Activated B cell treated with CpG ODN at 0.5 μM for 24 hours (primary cell): ENCODE measurements at regions of chr1 and their contacts with region 1.

Region 1: GRCh38 chr1:23959041-23959460 is 577 bp upstream of the PNRC2 start:
- DNase-seq: peak; percentile 78
- ATAC-seq: peak; percentile 77
- H3K4me3 Mint-ChIP-seq: peak overlapping the region; percentile 99
- H3K27ac Mint-ChIP-seq: peak overlapping the region; percentile 100
- H3K4me1 Mint-ChIP-seq: peaks cover 82% of the 10 kb centered on the region
- H3K27me3 Mint-ChIP-seq: no peaks in the 10 kb centered on the region
- CTCF ChIP-seq: no peak

Region 2: GRCh38 chr1:23800400-23801337 is 158.4 kb before region 1 on chr1 and contains the start of gene GALE:
- CTCF ChIA-PET with region 1: no interaction called
- POLR2A ChIA-PET with region 1: interaction called, 4 read pairs
- intact Hi-C with region 1: loop called (anchors 2 kb)
- DNase-seq: peak; percentile 94
- ATAC-seq: peak; percentile 95
- H3K4me3 Mint-ChIP-seq: peak within 1 kb of the TSS; percentile 91
- H3K27ac Mint-ChIP-seq: peak within 1 kb of the TSS; percentile 76
- H3K4me1 Mint-ChIP-seq: peaks cover 21% of the 10 kb centered on the region
- H3K27me3 Mint-ChIP-seq: no peaks in the 10 kb centered on the region
- CTCF ChIP-seq: no peak
- total RNA-seq, gene GALE: 15.9 and 16.4 TPM in 2 replicates

Region 3: GRCh38 chr1:23867953-23868556 is 91.0 kb before region 1 on chr1 and contains the start of gene FUCA1:
- CTCF ChIA-PET with region 1: no interaction called
- POLR2A ChIA-PET with region 1: no interaction called
- intact Hi-C with region 1: loop called (anchors 1 kb)
- DNase-seq: peak; percentile 92
- ATAC-seq: peak; percentile 97
- H3K4me3 Mint-ChIP-seq: peak within 1 kb of the TSS; percentile 84
- H3K27ac Mint-ChIP-seq: peak within 1 kb of the TSS; percentile 87
- H3K4me1 Mint-ChIP-seq: peaks cover 36% of the 10 kb centered on the region
- H3K27me3 Mint-ChIP-seq: no peaks in the 10 kb centered on the region
- CTCF ChIP-seq: no peak
- total RNA-seq, gene FUCA1: 9.5 and 10.7 TPM in 2 replicates

Region 4: GRCh38 chr1:23930861-23931490 is 28.1 kb before region 1 on chr1:
- CTCF ChIA-PET with region 1: interaction called, 3 read pairs
- POLR2A ChIA-PET with region 1: interaction called, 54 read pairs
- intact Hi-C with region 1: loop called (anchors 1 kb)
- DNase-seq: no peak
- ATAC-seq: peak; percentile 86
- H3K4me3 Mint-ChIP-seq: peak overlapping the region; percentile 76
- H3K27ac Mint-ChIP-seq: peak overlapping the region; percentile 91
- H3K4me1 Mint-ChIP-seq: peaks cover 43% of the 10 kb centered on the region
- H3K27me3 Mint-ChIP-seq: no peaks in the 10 kb centered on the region
- CTCF ChIP-seq: no peak

Region 5: DNA sequence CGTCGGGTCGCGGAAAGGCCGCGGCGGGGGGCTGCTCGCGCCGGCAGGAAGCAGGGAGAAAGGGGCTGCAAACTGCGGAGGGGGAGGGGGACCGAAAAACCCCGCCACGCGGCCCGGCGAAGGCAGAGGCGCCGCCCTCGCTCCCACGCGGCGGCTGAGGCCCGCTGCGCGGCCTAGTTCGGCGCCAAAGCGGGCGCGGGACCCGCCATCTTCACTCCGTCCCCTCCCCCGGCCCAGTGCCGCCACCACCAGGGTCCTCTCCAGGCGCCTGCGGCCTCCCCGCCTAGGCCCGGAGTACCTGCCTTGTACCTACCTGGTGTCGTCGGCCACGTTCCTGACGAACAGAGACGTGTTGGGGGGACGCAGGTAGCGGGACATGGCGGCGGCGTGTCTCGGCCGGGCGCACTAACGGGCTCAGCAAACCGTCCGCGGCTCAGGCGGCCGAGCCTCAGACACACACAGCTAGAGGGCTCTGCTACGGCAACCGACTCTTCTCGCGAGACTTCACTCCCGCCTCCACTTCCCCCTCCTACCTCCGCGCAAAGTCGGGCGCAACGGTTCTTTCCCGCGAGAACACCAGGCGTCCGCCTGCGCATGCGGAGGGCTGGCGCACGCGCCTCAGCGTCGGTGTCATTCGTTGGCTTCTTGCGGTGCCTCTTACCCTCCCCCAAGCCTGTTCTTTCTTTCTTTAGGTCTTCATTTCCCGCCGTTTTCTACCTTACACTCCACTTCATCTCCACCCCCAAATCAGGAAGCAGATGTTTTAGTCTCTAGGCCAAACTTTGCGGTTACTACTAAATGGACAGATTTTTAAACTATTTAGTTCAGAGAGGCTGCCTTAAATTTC is 21.1 kb after region 1 on chr1 and contains the start of gene SRSF10:
- CTCF ChIA-PET with region 1: interaction called, 3 read pairs
- POLR2A ChIA-PET with region 1: interaction called, 73 read pairs
- intact Hi-C with region 1: loop called (anchors 1 kb)
- DNase-seq: peak; percentile 92
- ATAC-seq: peak; percentile 96
- H3K4me3 Mint-ChIP-seq: peak within 1 kb of the TSS; percentile 96
- H3K27ac Mint-ChIP-seq: peak within 1 kb of the TSS; percentile 95
- H3K4me1 Mint-ChIP-seq: peaks cover 54% of the 10 kb centered on the region
- H3K27me3 Mint-ChIP-seq: no peaks in the 10 kb centered on the region
- CTCF ChIP-seq: no peak
- total RNA-seq, gene SRSF10: 168 and 192 TPM in 2 replicates

Region 6: DNA sequence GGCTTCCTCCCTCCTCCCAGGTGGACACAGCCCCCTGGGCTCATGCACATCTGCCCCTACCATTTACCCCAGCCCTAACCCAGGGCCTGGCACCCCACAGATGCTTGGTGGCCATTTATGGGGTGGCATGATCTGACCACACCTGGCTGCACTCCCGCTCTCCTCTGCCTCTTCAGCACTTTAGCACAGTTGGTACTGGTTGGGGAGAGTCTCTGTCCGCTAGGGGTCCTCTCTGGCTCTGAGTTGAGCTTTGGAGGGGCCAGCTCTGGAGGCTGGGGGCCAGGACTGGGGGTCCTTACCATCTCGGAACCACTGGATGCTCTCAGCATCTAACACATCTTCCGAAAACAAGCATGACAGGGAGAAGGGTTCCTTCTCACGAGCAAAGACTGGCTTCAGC is 135.5 kb after region 1 on chr1:
- CTCF ChIA-PET with region 1: no interaction called
- POLR2A ChIA-PET with region 1: no interaction called
- intact Hi-C with region 1: no loop called
- DNase-seq: no peak
- ATAC-seq: no peak
- H3K4me3 Mint-ChIP-seq: no peak overlapping the region
- H3K27ac Mint-ChIP-seq: no peak overlapping the region
- H3K4me1 Mint-ChIP-seq: no peaks in the 10 kb centered on the region
- H3K27me3 Mint-ChIP-seq: peaks cover 7% of the 10 kb centered on the region
- CTCF ChIP-seq: no peak

Region 7: GRCh38 chr1:24391882-24392603 is 433.0 kb after region 1 on chr1:
- CTCF ChIA-PET with region 1: no interaction called
- POLR2A ChIA-PET with region 1: no interaction called
- intact Hi-C with region 1: loop called (anchors 10 kb)
- DNase-seq: peak; percentile 56
- ATAC-seq: peak; percentile 77
- H3K4me3 Mint-ChIP-seq: peak overlapping the region; percentile 82
- H3K27ac Mint-ChIP-seq: peak overlapping the region; percentile 96
- H3K4me1 Mint-ChIP-seq: peaks cover 43% of the 10 kb centered on the region
- H3K27me3 Mint-ChIP-seq: no peaks in the 10 kb centered on the region
- CTCF ChIP-seq: no peak